ENCODE measurements at regions of chr7 and their contacts with region 1.

Region 1: GRCh38 chr7:95916573-95917297 is 144.4 kb downstream of the DYNC1I1 start:
- DNase-seq: peak; percentile 58
- ATAC-seq: peak; percentile 86
- H3K4me3 ChIP-seq: no peak overlapping the region
- H3K27ac ChIP-seq: no peak overlapping the region
- H3K4me1 ChIP-seq: no peaks in the 10 kb centered on the region
- H3K27me3 ChIP-seq: no peaks in the 10 kb centered on the region; the same call in 1 of the 2 replicates
- CTCF ChIP-seq: peak; percentile 94
- POLR2A ChIP-seq: no peak
- RAD21 ChIP-seq: peak; percentile 86

Region 2: GRCh38 chr7:97064967-97065587 is 1148.3 kb after region 1 on chr7:
- CTCF ChIA-PET with region 1: interaction called, 4 read pairs
- POLR2A ChIA-PET with region 1: no interaction called
- dilution Hi-C with region 1: no loop called
- in situ Hi-C with region 1: loop called (anchors 10 kb)
- intact Hi-C with region 1: loop called (anchors 1 kb)
- DNase-seq: peak; percentile 58
- ATAC-seq: peak; percentile 92
- H3K4me3 ChIP-seq: no peak overlapping the region
- H3K27ac ChIP-seq: no peak overlapping the region
- H3K4me1 ChIP-seq: no peaks in the 10 kb centered on the region
- H3K27me3 ChIP-seq: no peaks in the 10 kb centered on the region
- CTCF ChIP-seq: peak; percentile 59
- POLR2A ChIP-seq: no peak
- RAD21 ChIP-seq: peak; percentile 44

Region 3: DNA sequence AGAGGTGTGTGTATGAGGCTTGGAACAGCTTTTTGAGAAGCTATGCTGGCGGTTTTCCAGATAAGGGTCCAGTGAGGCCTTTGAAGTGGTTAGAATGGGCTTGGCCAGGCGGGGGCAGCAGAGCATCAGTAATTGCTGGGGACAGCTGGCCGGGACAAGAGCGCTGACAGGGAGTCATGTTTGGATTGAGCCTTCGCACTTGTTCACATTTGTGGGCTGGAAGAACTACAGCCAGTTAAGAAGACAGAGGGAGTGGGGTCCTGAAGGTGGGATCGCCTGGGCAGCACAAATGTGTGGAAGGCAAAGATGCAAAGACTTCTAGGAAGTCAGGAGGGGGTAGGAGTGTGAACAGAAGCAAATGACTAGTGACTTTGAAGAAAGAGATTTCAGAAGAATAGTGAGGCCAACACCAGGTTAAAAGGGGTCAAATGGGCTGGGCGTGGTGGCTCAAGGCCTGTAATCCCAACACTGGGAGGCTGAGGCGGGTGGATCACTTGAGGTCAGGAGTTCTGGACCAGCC is 1188.0 kb after region 1 on chr7:
- CTCF ChIA-PET with region 1: no interaction called
- POLR2A ChIA-PET with region 1: no interaction called
- dilution Hi-C with region 1: no loop called
- in situ Hi-C with region 1: no loop called
- intact Hi-C with region 1: loop called (anchors 1 kb)
- DNase-seq: peak; percentile 60
- ATAC-seq: peak; percentile 100
- H3K4me3 ChIP-seq: no peak overlapping the region
- H3K27ac ChIP-seq: no peak overlapping the region
- H3K4me1 ChIP-seq: no peaks in the 10 kb centered on the region
- H3K27me3 ChIP-seq: no peaks in the 10 kb centered on the region
- CTCF ChIP-seq: peak; percentile 85
- POLR2A ChIP-seq: no peak
- RAD21 ChIP-seq: peak; percentile 89

Region 4: DNA sequence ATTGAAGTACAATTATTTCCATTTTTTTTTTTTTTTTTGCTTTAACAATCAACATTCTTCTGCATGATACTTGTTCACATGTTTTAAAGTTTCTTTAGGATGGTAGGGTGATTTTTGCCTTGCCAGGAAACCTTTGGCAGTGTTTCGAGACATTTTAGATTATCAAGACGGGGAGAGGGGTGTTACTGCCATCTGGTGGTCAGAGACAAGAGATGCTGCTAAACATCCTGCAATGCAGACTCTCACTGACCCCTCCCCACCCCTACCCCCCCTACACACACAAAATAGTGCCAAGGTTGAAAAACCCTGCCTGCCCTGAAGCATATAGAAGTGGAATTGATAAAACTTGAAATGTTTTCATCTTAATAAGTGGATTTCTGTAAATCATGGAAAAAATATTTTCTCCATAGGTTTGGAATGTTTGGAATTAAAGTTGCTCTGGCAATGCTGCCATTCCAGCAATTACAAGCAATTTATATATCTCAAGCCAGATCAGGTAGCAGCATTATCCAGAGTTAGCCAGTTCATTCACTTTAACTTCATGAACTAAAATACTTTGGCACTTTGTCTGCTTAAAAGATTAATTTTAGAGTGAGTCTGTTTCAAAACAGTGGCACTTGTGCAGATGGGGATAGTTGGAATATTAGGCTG is 1262.8 kb after region 1 on chr7:
- CTCF ChIA-PET with region 1: no interaction called
- POLR2A ChIA-PET with region 1: no interaction called
- dilution Hi-C with region 1: no loop called
- in situ Hi-C with region 1: no loop called
- intact Hi-C with region 1: loop called (anchors 1 kb)
- DNase-seq: peak; percentile 65
- ATAC-seq: peak; percentile 89
- H3K4me3 ChIP-seq: no peak overlapping the region
- H3K27ac ChIP-seq: no peak overlapping the region
- H3K4me1 ChIP-seq: no peaks in the 10 kb centered on the region
- H3K27me3 ChIP-seq: no peaks in the 10 kb centered on the region
- CTCF ChIP-seq: peak; percentile 68
- POLR2A ChIP-seq: no peak
- RAD21 ChIP-seq: peak; percentile 67

Region 5: GRCh38 chr7:97835296-97836138 is 1918.8 kb after region 1 on chr7:
- CTCF ChIA-PET with region 1: no interaction called
- POLR2A ChIA-PET with region 1: no interaction called
- dilution Hi-C with region 1: no loop called
- in situ Hi-C with region 1: loop called (anchors 25 kb)
- intact Hi-C with region 1: loop called (anchors 1 kb)
- DNase-seq: peak; percentile 63
- ATAC-seq: peak; percentile 98
- H3K4me3 ChIP-seq: no peak overlapping the region
- H3K27ac ChIP-seq: no peak overlapping the region
- H3K4me1 ChIP-seq: no peaks in the 10 kb centered on the region
- H3K27me3 ChIP-seq: peaks cover 9% of the 10 kb centered on the region
- CTCF ChIP-seq: peak; percentile 71
- POLR2A ChIP-seq: no peak
- RAD21 ChIP-seq: peak; percentile 58

Measured in IMR-90 (cell line).